Mammary epithelial cell (primary cell): ENCODE measurements at regions of chr10 and their contacts with region 1.

Region 1: DNA sequence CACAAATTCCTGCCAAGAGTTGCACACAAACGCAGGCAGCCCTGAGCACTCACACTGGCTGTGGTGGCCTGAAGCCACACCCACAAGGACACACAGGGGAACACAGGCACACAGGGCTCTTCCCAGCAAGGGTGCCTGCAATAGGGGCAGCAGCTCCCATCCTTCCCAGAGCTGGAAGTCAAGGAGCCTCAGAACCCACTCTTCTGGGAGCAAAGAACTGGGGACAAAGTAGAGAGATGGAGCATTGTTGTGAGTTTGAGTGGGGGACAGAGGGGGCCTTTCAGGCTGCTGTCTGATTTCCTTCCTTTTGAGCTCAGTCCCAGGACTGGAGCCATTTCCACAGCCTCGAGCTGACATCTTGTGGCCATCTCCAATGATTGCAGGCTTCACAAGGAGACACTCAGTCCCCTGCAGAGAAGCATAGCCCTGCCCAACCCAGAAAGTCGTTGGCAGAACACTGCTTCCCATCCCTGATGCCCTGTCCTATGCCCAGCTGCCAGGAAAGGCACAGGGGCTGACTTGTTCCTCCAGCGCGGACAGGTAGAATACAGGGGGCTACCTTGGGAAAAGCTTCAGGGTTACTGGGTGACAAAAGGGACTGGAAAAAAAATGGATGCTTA is 34.4 kb upstream of the SLF2 start:
- DNase-seq: peak; percentile 46
- H3K4me3 ChIP-seq: no peak overlapping the region
- H3K27ac ChIP-seq: no peak overlapping the region
- H3K4me1 ChIP-seq: no peaks in the 10 kb centered on the region
- H3K27me3 ChIP-seq: no peaks in the 10 kb centered on the region
- CTCF ChIP-seq: peak; percentile 61 to 89

Region 2: DNA sequence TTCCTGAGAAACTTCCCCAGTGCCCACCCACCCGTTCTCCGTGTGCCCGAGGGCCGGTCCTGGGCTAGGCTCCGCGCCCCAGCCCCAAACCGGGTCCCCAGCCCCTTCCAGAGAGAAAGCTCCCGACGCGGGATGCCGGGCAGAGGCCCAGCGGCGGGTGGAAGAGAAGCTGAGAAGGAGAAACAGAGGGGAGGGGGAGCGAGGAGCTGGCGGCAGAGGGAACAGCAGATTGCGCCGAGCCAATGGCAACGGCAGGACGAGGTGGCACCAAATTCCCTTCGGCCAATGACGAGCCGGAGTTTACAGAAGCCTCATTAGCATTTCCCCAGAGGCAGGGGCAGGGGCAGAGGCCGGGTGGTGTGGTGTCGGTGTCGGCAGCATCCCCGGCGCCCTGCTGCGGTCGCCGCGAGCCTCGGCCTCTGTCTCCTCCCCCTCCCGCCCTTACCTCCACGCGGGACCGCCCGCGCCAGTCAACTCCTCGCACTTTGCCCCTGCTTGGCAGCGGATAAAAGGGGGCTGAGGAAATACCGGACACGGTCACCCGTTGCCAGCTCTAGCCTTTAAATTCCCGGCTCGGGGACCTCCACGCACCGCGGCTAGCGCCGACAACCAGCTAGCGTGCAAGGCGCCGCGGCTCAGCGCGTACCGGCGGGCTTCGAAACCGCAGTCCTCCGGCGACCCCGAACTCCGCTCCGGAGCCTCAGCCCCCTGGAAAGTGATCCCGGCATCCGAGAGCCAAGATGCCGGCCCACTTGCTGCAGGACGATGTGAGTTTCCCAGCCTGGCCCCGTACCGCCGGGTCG is 531.4 kb before region 1 on chr10 and contains the start of gene SCD:
- CTCF ChIA-PET with region 1: no interaction called
- dilution Hi-C with region 1: loop called (anchors 25 kb)
- in situ Hi-C with region 1: loop called (anchors 25 kb)
- intact Hi-C with region 1: loop called (anchors 1 kb)
- DNase-seq: peak; percentile 95
- H3K4me3 ChIP-seq: peak within 1 kb of the TSS; percentile 83 to 96 (median 94)
- H3K27ac ChIP-seq: peak within 1 kb of the TSS; percentile 71
- H3K4me1 ChIP-seq: peaks cover 43% of the 10 kb centered on the region
- H3K27me3 ChIP-seq: no peaks in the 10 kb centered on the region
- CTCF ChIP-seq: no peak
- total RNA-seq, gene SCD: 348 to 939 TPM

Region 3: GRCh38 chr10:100518761-100519241 is 359.6 kb before region 1 on chr10:
- CTCF ChIA-PET with region 1: interaction called, 10 read pairs
- dilution Hi-C with region 1: no loop called
- in situ Hi-C with region 1: no loop called
- intact Hi-C with region 1: loop called (anchors 5 kb)
- DNase-seq: peak; percentile 63
- H3K4me3 ChIP-seq: no peak overlapping the region
- H3K27ac ChIP-seq: no peak overlapping the region
- H3K4me1 ChIP-seq: peaks cover 35% of the 10 kb centered on the region
- H3K27me3 ChIP-seq: no peaks in the 10 kb centered on the region
- CTCF ChIP-seq: peak; percentile 73 to 81

Region 4: DNA sequence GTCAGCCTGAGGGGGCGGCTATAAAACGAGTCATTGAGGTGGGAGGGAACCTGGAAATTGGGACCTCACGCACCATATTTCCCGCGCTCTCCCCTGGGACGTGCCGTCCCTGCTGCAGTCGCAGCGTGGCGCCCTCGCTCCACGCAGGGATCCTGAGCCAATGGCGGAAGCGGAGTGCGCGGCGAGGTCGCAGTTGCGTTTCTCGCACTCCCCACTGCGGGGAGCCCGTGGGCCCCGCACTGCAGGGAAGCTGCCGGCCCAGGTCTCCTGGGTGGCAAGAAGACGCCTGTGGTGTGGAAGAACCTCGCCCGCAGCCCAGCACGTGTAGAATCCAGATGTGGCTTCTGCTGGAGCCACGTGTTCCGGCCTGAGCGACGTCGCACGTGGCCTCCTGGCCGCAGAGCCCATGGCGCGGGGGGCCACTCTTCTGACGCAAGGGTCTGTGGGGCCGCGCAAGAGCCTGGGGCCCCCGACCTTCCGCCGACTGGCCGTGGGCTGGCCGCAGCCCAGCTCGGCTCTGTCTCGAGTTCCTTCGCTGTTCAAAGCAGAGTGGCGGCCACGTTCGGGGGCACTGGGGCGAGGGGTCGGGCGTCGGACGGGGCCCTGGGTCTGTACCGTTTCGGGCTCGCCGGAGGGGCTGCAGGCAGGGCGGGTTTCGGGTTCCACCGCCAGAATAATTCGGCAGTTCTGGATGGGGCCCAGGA is 316.2 kb before region 1 on chr10:
- CTCF ChIA-PET with region 1: interaction called, 11 read pairs
- dilution Hi-C with region 1: no loop called
- in situ Hi-C with region 1: loop called (anchors 10 kb)
- intact Hi-C with region 1: loop called (anchors 1 kb)
- DNase-seq: peak; percentile 52
- H3K4me3 ChIP-seq: no peak overlapping the region
- H3K27ac ChIP-seq: no peak overlapping the region
- H3K4me1 ChIP-seq: peaks cover 9% of the 10 kb centered on the region
- H3K27me3 ChIP-seq: no peaks in the 10 kb centered on the region
- CTCF ChIP-seq: peak; percentile 85 to 91

Region 5: GRCh38 chr10:100743626-100744135 is 134.7 kb before region 1 on chr10:
- CTCF ChIA-PET with region 1: interaction called, 3 read pairs
- dilution Hi-C with region 1: no loop called
- in situ Hi-C with region 1: no loop called
- intact Hi-C with region 1: loop called (anchors 2 kb)
- DNase-seq: peak; percentile 41
- H3K4me3 ChIP-seq: no peak overlapping the region
- H3K27ac ChIP-seq: no peak overlapping the region
- H3K4me1 ChIP-seq: no peaks in the 10 kb centered on the region
- H3K27me3 ChIP-seq: peaks cover 91% of the 10 kb centered on the region
- CTCF ChIP-seq: peak; percentile 63 to 87

Region 6: DNA sequence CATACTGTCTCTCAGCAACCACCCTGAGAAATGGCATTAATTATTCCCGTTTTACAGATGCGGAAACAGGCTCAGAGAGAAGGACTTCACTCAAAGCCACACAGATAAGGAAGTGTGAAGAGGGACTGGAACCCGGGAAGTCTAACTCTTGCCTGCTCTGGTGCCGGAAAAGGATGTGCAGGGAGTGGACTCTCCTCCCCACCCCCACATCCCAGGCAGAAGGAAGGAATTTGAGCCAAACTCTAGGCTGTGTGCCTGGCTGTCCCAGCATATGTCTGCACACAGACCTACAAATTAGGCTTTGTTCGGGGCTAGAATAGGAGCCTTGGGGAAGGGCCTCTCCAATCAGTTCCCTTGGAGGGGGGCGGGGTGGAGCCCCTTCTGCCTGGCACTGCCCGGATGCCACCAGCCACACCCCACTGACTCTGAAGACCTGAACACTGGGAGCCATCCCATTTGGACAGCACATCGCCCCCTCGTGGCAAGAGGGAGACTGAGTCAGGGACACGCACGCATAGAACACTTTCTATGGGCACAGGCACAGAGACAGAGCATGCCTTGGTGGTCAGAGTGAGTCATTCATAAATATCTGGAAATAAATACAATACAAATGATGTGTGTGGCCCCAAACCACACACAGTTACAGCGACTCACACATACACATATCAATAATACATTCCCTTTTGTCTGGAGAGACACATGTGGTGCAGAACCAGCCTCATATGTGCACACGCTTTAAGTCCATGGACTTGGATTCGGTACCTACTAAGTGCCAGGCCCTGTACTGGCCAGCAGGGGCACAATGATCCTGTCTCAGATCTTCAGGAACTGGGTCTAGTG is 134.3 kb after region 1 on chr10:
- CTCF ChIA-PET with region 1: no interaction called
- dilution Hi-C with region 1: no loop called
- in situ Hi-C with region 1: no loop called
- intact Hi-C with region 1: loop called (anchors 2 kb)
- DNase-seq: peak; percentile 93
- H3K4me3 ChIP-seq: no peak overlapping the region
- H3K27ac ChIP-seq: peak overlapping the region; percentile 30
- H3K4me1 ChIP-seq: peaks cover 54% of the 10 kb centered on the region
- H3K27me3 ChIP-seq: no peaks in the 10 kb centered on the region
- CTCF ChIP-seq: peak; percentile 76

Region 7: GRCh38 chr10:101027106-101027720 is 148.8 kb after region 1 on chr10:
- CTCF ChIA-PET with region 1: no interaction called
- dilution Hi-C with region 1: no loop called
- in situ Hi-C with region 1: no loop called
- intact Hi-C with region 1: no loop called
- DNase-seq: no peak
- H3K4me3 ChIP-seq: no peak overlapping the region
- H3K27ac ChIP-seq: no peak overlapping the region
- H3K4me1 ChIP-seq: peaks cover 9% of the 10 kb centered on the region
- H3K27me3 ChIP-seq: no peaks in the 10 kb centered on the region
- CTCF ChIP-seq: no peak